Thyroid gland (tissue), 4 donors: ENCODE measurements at regions of chr7 and their contacts with region 1.

Region 1: DNA sequence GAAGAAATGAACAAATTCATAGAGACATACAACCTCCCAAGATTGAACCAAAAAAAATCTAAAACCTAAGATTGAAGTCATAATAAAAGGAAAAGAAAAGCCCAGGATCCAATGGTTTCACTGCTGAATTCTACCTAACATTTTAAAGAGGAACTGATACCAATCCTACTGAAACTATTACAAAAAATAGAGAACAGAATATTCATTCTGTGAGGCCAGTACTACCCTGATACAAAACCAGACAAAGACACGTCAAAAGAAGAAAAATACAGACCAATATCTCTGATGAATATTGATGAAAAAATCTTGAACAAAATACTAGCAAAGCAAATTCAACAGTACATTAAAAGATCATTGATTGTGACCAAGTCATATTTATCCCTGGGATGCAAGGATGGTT is 128.5 kb upstream of the STEAP1 start:
- DNase-seq: no peak
- H3K4me3 ChIP-seq: no peak overlapping the region
- H3K27ac ChIP-seq: no peak overlapping the region
- H3K4me1 ChIP-seq: no peaks in the 10 kb centered on the region
- H3K27me3 ChIP-seq: no peaks in the 10 kb centered on the region
- CTCF ChIP-seq: no peak
- POLR2A ChIP-seq: no peak

Region 2: GRCh38 chr7:89837515-89837914 is 188.3 kb before region 1 on chr7:
- intact Hi-C with region 1: no loop called
- DNase-seq: no peak
- H3K4me3 ChIP-seq: no peak overlapping the region
- H3K27ac ChIP-seq: no peak overlapping the region
- H3K4me1 ChIP-seq: no peaks in the 10 kb centered on the region
- H3K27me3 ChIP-seq: no peaks in the 10 kb centered on the region
- CTCF ChIP-seq: no peak
- POLR2A ChIP-seq: no peak

Region 3: DNA sequence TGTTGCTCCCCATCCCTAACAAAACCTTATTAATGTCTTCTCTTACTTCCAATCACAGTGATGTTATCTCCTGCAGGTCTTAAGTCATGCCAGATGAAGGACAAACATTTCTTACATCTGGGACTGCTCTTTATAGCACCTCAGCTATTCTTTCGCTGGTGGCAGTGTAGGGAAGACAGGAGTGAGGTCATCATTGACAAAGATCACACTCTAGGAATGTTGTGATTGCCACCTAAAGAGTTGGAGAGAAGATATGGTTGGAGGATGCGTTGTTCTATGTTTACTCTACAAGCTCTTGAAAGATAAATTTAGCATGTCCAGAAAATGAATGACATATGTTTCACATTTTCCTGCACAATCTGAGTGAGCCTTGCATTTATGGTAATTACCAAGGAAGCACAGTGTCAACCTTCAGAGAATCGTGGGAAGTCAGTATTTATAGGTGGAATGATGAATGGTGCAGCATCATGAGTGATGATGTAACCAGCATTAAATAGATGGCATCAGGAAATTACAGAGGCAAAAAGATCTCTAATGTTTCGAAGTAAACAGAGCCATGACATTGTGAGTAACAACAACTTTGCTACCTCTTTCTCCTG is 59.6 kb before region 1 on chr7:
- intact Hi-C with region 1: loop called (anchors 10 kb)
- DNase-seq: no peak
- H3K4me3 ChIP-seq: no peak overlapping the region
- H3K27ac ChIP-seq: no peak overlapping the region
- H3K4me1 ChIP-seq: no peaks in the 10 kb centered on the region
- H3K27me3 ChIP-seq: no peaks in the 10 kb centered on the region
- CTCF ChIP-seq: no peak
- POLR2A ChIP-seq: no peak